Heart left ventricle (tissue), 16 donors: ENCODE measurements at regions of chr11 and their contacts with region 1.

Region 1: DNA sequence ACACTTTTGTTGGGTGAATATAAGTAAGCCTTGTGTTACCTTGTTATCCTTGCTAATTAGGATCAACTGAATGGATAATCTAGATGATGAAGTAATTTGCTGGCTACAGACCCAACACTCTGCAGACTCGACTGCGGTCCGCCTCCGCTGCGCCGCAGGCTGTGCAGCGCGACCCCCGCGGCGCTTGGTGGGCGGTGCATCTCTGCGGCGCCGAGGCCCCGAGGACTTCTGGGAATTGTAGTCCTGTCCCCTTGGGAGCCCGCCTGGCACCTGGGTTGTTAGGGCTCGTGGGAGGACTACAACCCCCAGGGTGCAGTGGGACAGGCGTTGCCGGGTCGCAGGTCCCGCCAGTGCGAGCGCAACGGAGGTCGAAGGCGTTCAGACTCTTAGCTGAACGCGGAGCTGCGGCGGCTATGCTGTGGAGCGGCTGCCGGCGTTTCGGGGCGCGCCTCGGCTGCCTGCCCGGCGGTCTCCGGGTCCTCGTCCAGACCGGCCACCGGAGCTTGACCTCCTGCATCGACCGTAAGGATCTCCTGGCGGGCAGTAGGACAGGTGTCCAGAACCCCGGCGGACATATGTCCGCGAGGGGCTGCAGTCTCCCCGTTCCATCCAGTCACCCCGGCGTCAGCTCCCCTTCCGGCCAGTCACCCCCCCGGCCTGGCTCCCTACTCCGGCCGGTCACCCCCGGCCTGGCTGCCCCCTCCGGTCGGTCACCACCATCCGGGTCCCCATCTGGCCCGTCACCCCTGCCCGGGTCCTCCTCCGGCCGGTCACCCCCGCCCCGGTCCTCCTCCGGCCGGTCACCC is at the starts of genes ACAD8 and THYN1:
- DNase-seq: peak; percentile 98
- ATAC-seq: peak; percentile 100
- H3K4me3 ChIP-seq: peak within 1 kb of the TSS; percentile 78 to 97 (median 88)
- H3K27ac ChIP-seq: peak within 1 kb of the TSS in 11 of 12 donors; percentile 64 to 85 (median 78)
- H3K4me1 ChIP-seq: peaks cover 4 to 33% (median 21%) of the 10 kb centered on the region in 12 donors
- H3K27me3 ChIP-seq: no peaks in the 10 kb centered on the region
- CTCF ChIP-seq: peak in 11 of 12 donors; percentile 19 to 61 (median 46)
- POLR2A ChIP-seq: peak in 1 of 2 donors; percentile 84
- total RNA-seq, gene ACAD8: 23.2 to 48.2 (median 38.9) TPM
- total RNA-seq, gene THYN1: 34.1 to 47.8 (median 41.9) TPM

Region 2: DNA sequence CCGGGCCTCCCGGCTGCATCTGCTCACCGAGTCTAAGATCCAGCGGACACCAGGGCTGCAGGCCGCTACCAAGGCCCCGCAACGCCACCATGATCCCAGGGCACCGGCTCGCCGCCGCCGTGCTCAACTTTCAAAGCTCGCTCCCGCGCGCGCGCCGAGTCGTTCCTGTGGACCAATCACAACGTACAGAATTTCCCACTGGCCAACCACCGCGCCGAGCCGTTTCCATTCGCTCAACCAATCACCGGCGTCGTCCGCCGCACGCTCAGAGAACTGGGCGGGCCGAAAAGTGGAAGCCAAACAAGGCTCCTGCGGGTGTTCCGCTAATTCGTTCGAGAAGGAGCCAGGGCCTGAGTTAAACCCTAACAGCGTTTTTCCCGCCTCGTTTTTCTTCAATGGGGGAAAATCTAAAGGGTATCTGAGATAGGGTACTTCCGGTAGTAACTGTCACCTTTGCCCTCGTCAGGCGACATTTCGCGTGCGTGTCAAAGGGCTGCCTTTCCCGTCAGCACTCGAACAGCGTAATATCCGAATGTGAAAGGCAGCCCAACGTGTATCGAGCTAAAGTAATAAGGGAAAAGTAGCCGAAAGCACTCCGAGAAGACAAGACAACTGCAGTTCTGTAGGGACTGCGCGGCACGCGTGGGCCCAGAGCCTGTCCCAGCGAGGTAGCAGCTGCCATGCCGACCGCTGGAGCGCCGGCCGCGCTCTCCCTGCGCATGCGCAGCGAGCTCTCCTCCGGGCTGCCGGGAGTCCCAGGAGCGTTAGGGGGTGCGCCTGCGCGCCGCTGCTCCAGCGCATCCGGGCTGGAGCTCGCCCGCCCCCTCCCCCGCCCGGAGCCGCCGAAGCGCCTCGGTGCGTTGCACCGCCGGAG is 29.3 kb before region 1 on chr11 and contains the starts of genes NCAPD3 and VPS26B:
- intact Hi-C with region 1: loop called in 3 of 10 experiments (anchors 1 to 2 kb)
- DNase-seq: peak; percentile 97 to 98 (median 97)
- ATAC-seq: peak; percentile 91 to 97 (median 94)
- H3K4me3 ChIP-seq: peak within 1 kb of the TSS; percentile 64 to 95 (median 78)
- H3K27ac ChIP-seq: peak within 1 kb of the TSS; percentile 90 to 98 (median 94)
- H3K4me1 ChIP-seq: peaks cover 4 to 47% (median 35%) of the 10 kb centered on the region in 12 donors
- H3K27me3 ChIP-seq: no peaks in the 10 kb centered on the region
- CTCF ChIP-seq: no peak
- POLR2A ChIP-seq: peak; percentile 29 to 95
- total RNA-seq, gene NCAPD3: 9.4 to 18.8 (median 11.0) TPM
- total RNA-seq, gene VPS26B: 35.0 to 49.6 (median 37.8) TPM